Activated CD4-positive, alpha-beta T cell treated with anti-CD3 and anti-CD28 coated beads, Interleukin-2, amount 10 ng/mL, durations not matched to agents 24 days and 14 days (primary cell): ENCODE measurements at regions of chr10 and their contacts with region 1.

Region 1: GRCh38 chr10:11724938-11725776 is 17.0 kb upstream of the ECHDC3 start:
- DNase-seq: peak; percentile 70
- H3K4me3 Mint-ChIP-seq: no peak overlapping the region
- H3K27ac Mint-ChIP-seq: no peak overlapping the region
- H3K4me1 Mint-ChIP-seq: peaks cover 4% of the 10 kb centered on the region
- H3K27me3 Mint-ChIP-seq: peaks cover 49% of the 10 kb centered on the region

Region 2: DNA sequence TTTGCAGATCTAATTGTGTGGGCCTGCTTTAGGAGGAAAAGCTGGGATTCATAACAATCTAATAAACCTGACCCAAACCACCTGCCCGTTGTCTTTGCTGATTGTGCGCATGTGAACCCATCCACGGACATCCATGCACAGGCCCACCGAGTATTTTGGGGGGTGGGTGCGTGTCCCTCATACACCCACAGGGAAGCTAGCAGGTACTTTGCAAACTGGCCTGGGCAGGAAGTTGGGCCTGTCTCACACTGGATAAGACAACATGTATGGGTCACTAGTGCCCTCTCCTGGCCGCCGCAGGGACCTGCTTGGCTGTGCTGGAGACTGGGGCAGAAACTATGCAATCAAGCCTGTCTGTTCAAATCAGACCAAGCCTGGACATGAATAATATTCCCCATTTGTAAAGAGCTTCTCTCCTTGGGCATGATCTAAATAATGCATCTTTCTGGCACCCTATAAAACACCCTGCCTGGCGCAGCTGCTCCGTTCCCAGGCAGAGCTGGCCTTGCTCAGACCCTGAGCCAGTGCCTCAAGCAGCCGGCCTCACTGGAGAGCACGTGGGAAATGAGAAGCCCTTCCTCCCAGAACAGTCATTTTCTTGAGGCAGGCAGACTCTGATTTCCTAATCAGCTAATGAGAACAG is 32.8 kb after region 1 on chr10:
- intact Hi-C with region 1: loop called (anchors 1 kb)
- DNase-seq: peak; percentile 95
- H3K4me3 Mint-ChIP-seq: no peak overlapping the region
- H3K27ac Mint-ChIP-seq: no peak overlapping the region
- H3K4me1 Mint-ChIP-seq: peaks cover 4% of the 10 kb centered on the region
- H3K27me3 Mint-ChIP-seq: peaks cover 20% of the 10 kb centered on the region